MCF 10A (cell line): ENCODE measurements at regions of chr6 and their contacts with region 1.

Region 1: DNA sequence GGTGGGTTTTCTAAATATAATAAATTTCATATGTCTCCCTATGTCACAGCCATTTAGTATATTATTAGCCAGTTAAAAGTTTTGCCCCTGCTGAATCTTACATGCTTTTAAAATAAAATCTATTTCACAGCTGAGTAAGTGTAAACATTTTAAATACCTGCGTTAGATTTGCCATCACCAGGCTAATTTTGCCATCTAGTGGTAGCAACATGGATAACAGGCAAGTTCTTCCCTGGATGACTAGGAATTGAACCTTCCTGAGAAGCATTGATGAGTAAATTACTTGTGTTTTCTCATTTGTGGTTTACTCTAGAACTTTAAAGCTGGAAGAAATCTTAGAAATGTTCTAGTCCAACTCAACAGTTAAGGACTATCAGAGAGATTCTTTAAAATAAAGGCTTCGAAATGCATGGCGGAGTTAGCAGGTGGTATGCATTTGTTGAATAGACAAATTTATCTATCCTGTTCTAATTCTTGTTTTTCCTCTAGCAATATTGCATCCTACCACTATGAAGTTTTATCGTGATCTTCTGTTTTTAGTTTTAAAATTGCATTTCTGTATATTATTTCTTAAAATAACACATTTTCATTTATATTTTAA is 2.6 kb downstream of the PRSS35 start:
- DNase-seq: peak; percentile 71
- H3K4me3 Mint-ChIP-seq: no peak overlapping the region
- H3K27ac Mint-ChIP-seq: no peak overlapping the region
- H3K4me1 Mint-ChIP-seq: peaks cover 6% of the 10 kb centered on the region
- H3K27me3 Mint-ChIP-seq: no peaks in the 10 kb centered on the region
- CTCF ChIP-seq: peak; percentile 81

Region 2: DNA sequence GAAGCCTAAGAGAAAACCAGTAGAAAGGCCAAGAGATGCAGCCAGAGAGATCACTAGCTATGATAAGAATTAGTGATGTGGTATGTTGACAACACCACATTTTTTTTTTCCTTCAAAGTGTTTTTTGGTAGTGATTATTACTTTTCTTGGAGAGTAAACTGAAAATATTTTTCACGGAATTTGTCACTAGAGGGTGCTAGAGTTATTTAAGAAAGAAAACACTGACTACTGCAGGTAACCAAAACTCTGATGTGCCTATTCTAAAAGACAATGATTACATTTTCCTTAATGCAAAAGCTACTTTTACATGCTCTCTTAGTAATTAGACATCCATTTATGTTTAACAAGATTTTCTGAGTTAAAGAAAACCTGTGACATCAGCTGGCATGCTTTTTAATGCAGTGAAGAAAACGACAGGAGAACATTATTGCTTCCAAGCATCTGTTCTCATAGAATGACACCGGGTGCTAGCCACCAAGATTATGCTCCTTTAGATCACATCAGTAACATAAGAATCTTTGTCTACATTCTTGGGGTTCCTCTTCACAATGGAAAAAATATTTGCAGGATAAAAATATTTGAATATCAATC is 293.0 kb before region 1 on chr6:
- CTCF ChIA-PET with region 1: interaction called, 397 read pairs
- POLR2A ChIA-PET with region 1: interaction called, 8 read pairs
- intact Hi-C with region 1: loop called (anchors 1 kb)
- DNase-seq: peak; percentile 41
- H3K4me3 Mint-ChIP-seq: no peak overlapping the region
- H3K27ac Mint-ChIP-seq: no peak overlapping the region
- H3K4me1 Mint-ChIP-seq: no peaks in the 10 kb centered on the region
- H3K27me3 Mint-ChIP-seq: no peaks in the 10 kb centered on the region
- CTCF ChIP-seq: peak; percentile 39

Region 3: DNA sequence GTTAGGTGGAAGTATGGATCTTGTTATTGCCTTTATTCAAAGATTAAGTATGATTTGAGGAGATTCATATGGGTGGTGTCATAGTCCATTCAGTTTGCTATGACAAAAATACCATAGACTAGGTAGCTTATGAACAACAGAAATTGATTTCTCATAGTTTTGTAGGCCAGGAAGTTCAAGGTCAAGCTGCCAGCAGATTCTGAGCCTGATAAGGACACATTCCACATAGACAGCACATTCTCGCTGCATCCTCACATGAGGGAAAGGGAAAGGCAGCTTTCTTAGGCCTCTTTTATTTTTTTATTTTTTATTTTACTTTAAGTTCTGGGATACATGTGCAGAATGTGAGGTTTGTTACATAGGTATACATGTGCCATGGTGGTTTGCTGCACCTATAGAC is 111.8 kb before region 1 on chr6:
- CTCF ChIA-PET with region 1: interaction called, 10 read pairs
- POLR2A ChIA-PET with region 1: no interaction called
- intact Hi-C with region 1: no loop called
- DNase-seq: no peak
- H3K4me3 Mint-ChIP-seq: no peak overlapping the region
- H3K27ac Mint-ChIP-seq: no peak overlapping the region
- H3K4me1 Mint-ChIP-seq: no peaks in the 10 kb centered on the region
- H3K27me3 Mint-ChIP-seq: no peaks in the 10 kb centered on the region
- CTCF ChIP-seq: no peak

Region 4: DNA sequence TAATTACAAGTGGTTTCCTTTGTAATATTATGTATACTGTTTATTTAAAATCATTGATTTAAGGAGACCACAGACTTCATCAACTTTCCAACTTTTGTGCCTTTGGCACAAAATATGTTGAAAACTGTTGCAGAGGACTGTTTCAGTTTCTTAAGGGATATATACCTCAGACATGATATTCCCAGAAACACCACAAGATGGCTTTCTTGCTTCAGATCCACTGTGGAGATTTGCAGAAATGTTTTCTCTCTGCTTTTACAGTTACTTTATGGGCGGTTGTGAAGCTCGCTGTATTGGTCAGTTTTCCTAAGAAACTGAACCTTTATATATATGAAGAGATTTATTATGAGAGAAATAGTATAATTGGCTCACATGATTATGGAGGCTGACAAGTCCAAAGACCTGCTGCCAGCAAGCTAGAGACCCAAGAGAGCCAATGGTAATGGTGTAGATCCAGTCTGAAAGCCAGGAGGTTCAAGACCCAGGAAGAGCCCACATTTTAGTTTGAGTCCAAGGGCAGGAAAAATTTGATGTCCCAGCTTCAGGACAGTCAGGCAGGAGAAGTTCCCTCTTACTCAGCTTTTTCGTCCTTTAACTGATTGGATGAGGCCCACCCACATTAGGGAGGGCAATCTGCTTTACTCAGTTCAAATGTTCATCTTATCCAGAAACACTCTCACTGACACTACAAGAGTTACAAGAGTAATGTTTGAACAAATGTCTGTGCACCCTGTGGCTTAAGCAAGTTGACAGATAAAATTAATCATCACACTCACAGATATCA is 96.9 kb before region 1 on chr6:
- CTCF ChIA-PET with region 1: interaction called, 380 read pairs
- POLR2A ChIA-PET with region 1: interaction called, 12 read pairs
- intact Hi-C with region 1: loop called (anchors 1 kb)
- DNase-seq: peak; percentile 60
- H3K4me3 Mint-ChIP-seq: no peak overlapping the region
- H3K27ac Mint-ChIP-seq: no peak overlapping the region
- H3K4me1 Mint-ChIP-seq: no peaks in the 10 kb centered on the region
- H3K27me3 Mint-ChIP-seq: no peaks in the 10 kb centered on the region
- CTCF ChIP-seq: peak; percentile 60

Region 5: GRCh38 chr6:83459663-83460062 is 55.3 kb before region 1 on chr6:
- CTCF ChIA-PET with region 1: interaction called, 19 read pairs
- POLR2A ChIA-PET with region 1: no interaction called
- intact Hi-C with region 1: no loop called
- DNase-seq: no peak
- H3K4me3 Mint-ChIP-seq: no peak overlapping the region
- H3K27ac Mint-ChIP-seq: no peak overlapping the region
- H3K4me1 Mint-ChIP-seq: peaks cover 12% of the 10 kb centered on the region
- H3K27me3 Mint-ChIP-seq: no peaks in the 10 kb centered on the region
- CTCF ChIP-seq: no peak

Region 6: GRCh38 chr6:83480470-83480869 is 34.5 kb before region 1 on chr6:
- CTCF ChIA-PET with region 1: interaction called, 15 read pairs
- POLR2A ChIA-PET with region 1: no interaction called
- intact Hi-C with region 1: no loop called
- DNase-seq: peak; percentile 54
- H3K4me3 Mint-ChIP-seq: no peak overlapping the region
- H3K27ac Mint-ChIP-seq: no peak overlapping the region
- H3K4me1 Mint-ChIP-seq: no peaks in the 10 kb centered on the region
- H3K27me3 Mint-ChIP-seq: no peaks in the 10 kb centered on the region
- CTCF ChIP-seq: no peak

Region 7: GRCh38 chr6:83574787-83575186 is 59.8 kb after region 1 on chr6:
- CTCF ChIA-PET with region 1: no interaction called
- POLR2A ChIA-PET with region 1: no interaction called
- intact Hi-C with region 1: no loop called
- DNase-seq: peak; percentile 30
- H3K4me3 Mint-ChIP-seq: no peak overlapping the region
- H3K27ac Mint-ChIP-seq: no peak overlapping the region
- H3K4me1 Mint-ChIP-seq: peaks cover 5% of the 10 kb centered on the region
- H3K27me3 Mint-ChIP-seq: peaks cover 23% of the 10 kb centered on the region
- CTCF ChIP-seq: no peak

Region 8: DNA sequence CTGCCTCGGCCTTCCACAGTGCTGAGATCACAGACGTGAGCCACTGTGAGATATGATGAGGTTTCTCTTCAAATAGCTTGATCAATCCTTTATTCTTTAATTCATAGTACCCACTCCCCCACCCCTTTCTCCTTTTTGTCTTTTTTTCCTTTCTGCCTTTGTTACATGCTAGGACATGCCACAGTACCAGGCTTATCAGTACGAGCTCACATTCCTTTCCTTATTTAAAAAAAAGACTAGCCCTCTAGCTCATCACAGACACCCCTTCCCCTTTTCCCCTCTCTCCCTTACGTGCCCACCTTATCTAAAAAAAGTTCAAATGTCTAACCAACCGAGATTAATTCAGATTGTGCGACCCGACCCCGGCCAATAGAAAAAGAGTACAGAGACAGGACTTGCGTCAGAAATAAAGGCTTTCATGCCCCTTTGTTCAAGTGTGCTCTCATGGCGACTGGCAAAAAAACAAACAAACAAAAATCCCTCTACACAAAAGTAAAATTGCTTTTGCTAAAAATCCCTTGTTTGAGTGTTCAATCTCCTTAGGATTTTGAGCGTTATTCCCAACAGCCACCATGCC is 567.8 kb after region 1 on chr6:
- CTCF ChIA-PET with region 1: no interaction called
- POLR2A ChIA-PET with region 1: no interaction called
- intact Hi-C with region 1: no loop called
- DNase-seq: no peak
- H3K4me3 Mint-ChIP-seq: no peak overlapping the region
- H3K27ac Mint-ChIP-seq: peak overlapping the region; percentile 5
- H3K4me1 Mint-ChIP-seq: peaks cover 7% of the 10 kb centered on the region
- H3K27me3 Mint-ChIP-seq: no peaks in the 10 kb centered on the region
- CTCF ChIP-seq: no peak

Region 9: GRCh38 chr6:85261271-85261670 is 1746.3 kb after region 1 on chr6:
- CTCF ChIA-PET with region 1: no interaction called
- POLR2A ChIA-PET with region 1: no interaction called
- intact Hi-C with region 1: no loop called
- DNase-seq: no peak
- H3K4me3 Mint-ChIP-seq: no peak overlapping the region
- H3K27ac Mint-ChIP-seq: no peak overlapping the region
- H3K4me1 Mint-ChIP-seq: no peaks in the 10 kb centered on the region
- H3K27me3 Mint-ChIP-seq: no peaks in the 10 kb centered on the region
- CTCF ChIP-seq: no peak